Right cardiac atrium (tissue), 5 donors: ENCODE measurements at regions of chr1 and their contacts with region 1.

Region 1: GRCh38 chr1:77832901-77833300 is 53.5 kb downstream of the MIGA1 start:
- DNase-seq: no peak
- ATAC-seq: peak; percentile 91 to 93
- H3K4me3 ChIP-seq: no peak overlapping the region
- H3K27ac ChIP-seq: no peak overlapping the region
- H3K4me1 ChIP-seq: peaks cover 8% of the 10 kb centered on the region
- H3K27me3 ChIP-seq: no peaks in the 10 kb centered on the region

Region 2: DNA sequence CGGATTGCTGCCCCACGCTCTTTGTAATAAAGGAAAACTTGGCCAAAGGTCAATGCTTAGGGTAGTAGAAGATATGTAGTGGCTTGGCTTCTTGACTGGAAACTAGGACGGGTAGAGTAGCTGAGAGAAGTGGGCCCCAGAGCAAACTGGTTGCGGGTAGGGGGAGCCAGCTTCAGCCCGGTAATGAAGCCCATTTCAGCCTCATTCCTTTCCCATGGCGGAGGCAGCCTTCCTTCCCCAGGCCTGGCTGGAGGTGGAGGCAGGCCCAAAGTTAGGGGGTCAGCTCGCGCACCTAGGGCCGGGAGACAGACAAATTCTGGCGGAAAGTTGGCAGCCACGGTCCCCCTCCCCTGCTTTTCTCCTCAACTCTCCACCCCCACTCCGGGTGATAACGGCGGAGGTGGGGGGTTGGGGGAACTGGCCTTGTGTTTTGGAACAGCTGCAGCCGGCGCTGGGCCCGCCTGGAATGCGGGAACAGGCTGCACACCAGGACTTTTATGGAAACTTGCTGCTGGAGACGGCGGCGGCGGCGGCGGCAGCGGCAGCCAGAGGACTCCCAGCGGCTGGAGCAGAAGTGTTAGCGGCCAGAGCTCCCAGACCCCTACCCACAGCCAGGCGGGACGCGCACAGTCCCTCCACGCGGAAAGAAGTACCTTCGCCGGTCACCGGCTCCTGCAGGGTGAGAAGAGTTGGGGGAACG is 55.3 kb after region 1 on chr1 and contains the start of gene NEXN:
- intact Hi-C with region 1: loop called (anchors 5 kb)
- DNase-seq: peak; percentile 89 to 96 (median 94)
- ATAC-seq: peak; percentile 94
- H3K4me3 ChIP-seq: peak within 1 kb of the TSS; percentile 84
- H3K27ac ChIP-seq: peak within 1 kb of the TSS; percentile 93
- H3K4me1 ChIP-seq: no peaks in the 10 kb centered on the region
- H3K27me3 ChIP-seq: no peaks in the 10 kb centered on the region
- total RNA-seq, gene NEXN: 209 to 313 (median 259) TPM